ENCODE measurements at regions of chr6 and their contacts with region 1.

Region 1: DNA sequence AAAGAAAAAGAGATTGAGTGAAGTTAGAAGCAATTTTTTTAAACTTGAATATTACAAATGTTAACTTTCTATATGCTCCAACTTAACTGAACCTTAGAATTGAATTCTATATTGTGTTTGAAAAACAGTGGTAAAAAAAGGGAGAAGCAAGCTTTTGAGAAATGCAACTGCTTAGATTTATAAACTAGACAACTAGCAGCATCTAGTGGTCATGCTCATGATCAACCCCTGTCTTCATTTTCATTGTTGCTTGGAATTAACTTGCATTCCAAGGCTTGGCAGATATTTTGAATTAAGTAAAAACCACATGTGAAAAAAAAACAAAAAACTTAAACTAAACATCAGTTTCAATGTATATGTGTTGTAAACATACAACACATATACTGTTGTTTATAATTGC is 113.1 kb downstream of the C6orf58 start:
- DNase-seq: peak; percentile 1
- H3K4me3 Mint-ChIP-seq: no peak overlapping the region
- H3K27ac Mint-ChIP-seq: no peak overlapping the region
- H3K4me1 Mint-ChIP-seq: no peaks in the 10 kb centered on the region
- H3K27me3 Mint-ChIP-seq: peaks cover 30% of the 10 kb centered on the region
- CTCF ChIP-seq: no peak

Region 2: GRCh38 chr6:127554435-127555006 is 135.6 kb before region 1 on chr6:
- CTCF ChIA-PET with region 1: no interaction called
- intact Hi-C with region 1: loop called (anchors 1 kb)
- DNase-seq: peak; percentile 54
- H3K4me3 Mint-ChIP-seq: no peak overlapping the region
- H3K27ac Mint-ChIP-seq: no peak overlapping the region
- H3K4me1 Mint-ChIP-seq: peaks cover 7% of the 10 kb centered on the region
- H3K27me3 Mint-ChIP-seq: no peaks in the 10 kb centered on the region
- CTCF ChIP-seq: no peak

Region 3: GRCh38 chr6:127606131-127606562 is 83.9 kb before region 1 on chr6:
- CTCF ChIA-PET with region 1: interaction called, 13 read pairs
- intact Hi-C with region 1: loop called (anchors 5 kb)
- DNase-seq: peak; percentile 5
- H3K4me3 Mint-ChIP-seq: no peak overlapping the region
- H3K27ac Mint-ChIP-seq: no peak overlapping the region
- H3K4me1 Mint-ChIP-seq: no peaks in the 10 kb centered on the region
- H3K27me3 Mint-ChIP-seq: no peaks in the 10 kb centered on the region
- CTCF ChIP-seq: no peak